B cell (primary cell): ENCODE measurements at regions of chr18 and their contacts with region 1.

Region 1: GRCh38 chr18:3261371-3262246 is at the start of gene MYL12B:
- DNase-seq: peak; percentile 93
- ATAC-seq: peak; percentile 80
- H3K4me3 ChIP-seq: peak within 1 kb of the TSS; percentile 75 to 96 (median 86)
- H3K4me3 Mint-ChIP-seq: peak within 1 kb of the TSS; percentile 88
- H3K27ac ChIP-seq: peak within 1 kb of the TSS; percentile 86 to 97
- H3K27ac Mint-ChIP-seq: peak within 1 kb of the TSS; percentile 100
- H3K4me1 ChIP-seq: peaks cover 70 to 73% of the 10 kb centered on the region in 2 donors
- H3K4me1 Mint-ChIP-seq: peaks cover 77% of the 10 kb centered on the region
- H3K27me3 ChIP-seq: no peaks in the 10 kb centered on the region
- H3K27me3 Mint-ChIP-seq: no peaks in the 10 kb centered on the region
- CTCF ChIP-seq: no peak
- total RNA-seq, gene MYL12B: 124 and 127 TPM in 2 replicates

Region 2: DNA sequence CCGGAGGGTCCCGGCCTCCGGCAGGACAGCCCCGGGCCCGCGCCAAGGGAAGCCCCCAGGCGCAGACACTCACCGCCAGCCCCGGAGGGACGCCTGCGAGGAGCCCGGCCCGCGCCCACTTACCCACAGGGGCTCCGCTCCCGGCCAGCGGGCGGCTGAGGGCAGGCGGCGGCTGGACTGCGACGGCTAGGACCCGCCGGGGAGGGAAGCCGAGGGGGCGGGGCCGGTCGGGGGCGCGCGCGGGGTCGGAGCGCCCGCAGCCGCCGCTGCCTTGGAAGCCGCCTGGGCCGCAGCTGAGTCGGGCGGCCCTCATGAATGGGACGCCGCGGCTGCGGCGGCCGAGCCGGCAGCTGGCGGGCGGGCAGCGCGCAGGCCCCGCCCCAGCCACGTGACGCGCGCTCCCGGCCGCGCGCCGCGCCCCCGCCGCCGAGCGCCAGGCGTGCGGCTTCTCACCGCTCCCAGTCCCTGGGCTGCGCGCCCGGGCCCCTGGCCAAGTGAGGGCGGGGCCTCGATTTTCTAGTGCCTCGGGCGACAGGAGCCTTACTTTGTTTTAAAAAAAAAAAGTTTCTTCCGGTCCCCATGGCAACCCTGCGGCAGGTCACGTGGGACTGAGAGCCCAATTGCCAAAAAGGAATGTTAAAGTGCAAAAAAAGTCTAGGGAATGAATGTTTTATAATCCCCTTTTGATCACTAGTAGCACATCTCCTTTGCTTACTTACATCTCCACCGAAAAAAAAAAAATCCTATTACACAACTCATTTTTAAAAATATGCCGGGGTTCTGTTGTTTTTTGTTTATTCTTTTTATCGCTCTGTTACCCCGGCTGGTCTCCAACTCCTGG is 248.4 kb before region 1 on chr18 and contains the start of gene LPIN2:
- CTCF ChIA-PET with region 1: no interaction called
- POLR2A ChIA-PET with region 1: no interaction called
- intact Hi-C with region 1: loop called (anchors 5 kb)
- DNase-seq: peak; percentile 96
- ATAC-seq: peak; percentile 83
- H3K4me3 ChIP-seq: peak within 1 kb of the TSS; percentile 43 to 75 (median 73)
- H3K4me3 Mint-ChIP-seq: peak within 1 kb of the TSS; percentile 93
- H3K27ac ChIP-seq: peak within 1 kb of the TSS; percentile 74 to 82
- H3K27ac Mint-ChIP-seq: peak within 1 kb of the TSS; percentile 89
- H3K4me1 ChIP-seq: peaks cover 51 to 54% of the 10 kb centered on the region in 2 donors
- H3K4me1 Mint-ChIP-seq: peaks cover 55% of the 10 kb centered on the region
- H3K27me3 ChIP-seq: no peaks in the 10 kb centered on the region
- H3K27me3 Mint-ChIP-seq: no peaks in the 10 kb centered on the region
- CTCF ChIP-seq: no peak
- total RNA-seq, gene LPIN2: 31.0 and 32.9 TPM in 2 replicates